Activated naive CD4-positive, alpha-beta T cell treated with anti-CD3 and anti-CD28 coated beads for 36 hours (primary cell): ENCODE measurements at regions of chr14 and their contacts with region 1.

Region 1: DNA sequence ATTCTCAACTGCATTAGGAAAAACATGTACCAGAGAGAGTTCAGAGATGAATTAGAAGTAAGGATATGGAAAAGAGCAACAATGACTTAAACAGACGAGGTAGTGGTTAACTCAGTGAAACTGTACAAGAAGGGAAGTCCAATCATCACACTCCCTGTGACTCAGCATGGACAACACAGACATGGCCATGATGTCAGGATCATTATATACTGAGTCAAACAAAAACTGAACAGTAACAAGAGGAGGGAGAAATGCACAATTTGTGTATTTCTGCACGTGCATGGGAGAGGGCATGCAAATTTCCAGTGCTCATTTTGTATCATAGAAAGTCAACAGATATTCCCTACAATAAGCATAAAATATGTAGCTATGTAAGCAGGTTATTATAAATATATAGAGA is 1037.8 kb downstream of the BCL11B start:
- DNase-seq: peak; percentile 82
- H3K4me3 Mint-ChIP-seq: no peak overlapping the region
- H3K27ac Mint-ChIP-seq: peak overlapping the region; percentile 71
- H3K4me1 Mint-ChIP-seq: peaks cover 74% of the 10 kb centered on the region
- H3K27me3 Mint-ChIP-seq: no peaks in the 10 kb centered on the region

Region 2: GRCh38 chr14:97724265-97724731 is 509.9 kb before region 1 on chr14:
- CTCF ChIA-PET with region 1: no interaction called
- intact Hi-C with region 1: loop called (anchors 5 kb)
- DNase-seq: peak; percentile 64
- H3K4me3 Mint-ChIP-seq: peak overlapping the region; percentile 76
- H3K27ac Mint-ChIP-seq: peak overlapping the region; percentile 96
- H3K4me1 Mint-ChIP-seq: peaks cover 69% of the 10 kb centered on the region
- H3K27me3 Mint-ChIP-seq: no peaks in the 10 kb centered on the region

Region 3: GRCh38 chr14:97994020-97994531 is 240.1 kb before region 1 on chr14:
- CTCF ChIA-PET with region 1: no interaction called
- intact Hi-C with region 1: loop called (anchors 5 kb)
- DNase-seq: peak; percentile 71
- H3K4me3 Mint-ChIP-seq: peak overlapping the region; percentile 70
- H3K27ac Mint-ChIP-seq: peak overlapping the region; percentile 100
- H3K4me1 Mint-ChIP-seq: peaks cover 82% of the 10 kb centered on the region
- H3K27me3 Mint-ChIP-seq: no peaks in the 10 kb centered on the region

Region 4: GRCh38 chr14:98198385-98198784 is 35.8 kb before region 1 on chr14:
- CTCF ChIA-PET with region 1: interaction called, 7 read pairs
- intact Hi-C with region 1: loop called (anchors 5 kb)
- DNase-seq: peak; percentile 60
- H3K4me3 Mint-ChIP-seq: peak overlapping the region; percentile 9
- H3K27ac Mint-ChIP-seq: peak overlapping the region; percentile 73
- H3K4me1 Mint-ChIP-seq: peaks cover 85% of the 10 kb centered on the region
- H3K27me3 Mint-ChIP-seq: no peaks in the 10 kb centered on the region

Region 5: GRCh38 chr14:98931911-98932310 is 697.7 kb after region 1 on chr14:
- CTCF ChIA-PET with region 1: no interaction called
- intact Hi-C with region 1: loop called (anchors 5 kb)
- DNase-seq: peak; percentile 86
- H3K4me3 Mint-ChIP-seq: peak overlapping the region; percentile 44
- H3K27ac Mint-ChIP-seq: peak overlapping the region; percentile 71
- H3K4me1 Mint-ChIP-seq: peaks cover 81% of the 10 kb centered on the region
- H3K27me3 Mint-ChIP-seq: no peaks in the 10 kb centered on the region